ENCODE measurements at regions of chr1 and their contacts with region 1.

Region 1: GRCh38 chr1:41241782-41242341 is at the start of gene SCMH1:
- DNase-seq: peak; percentile 72
- H3K4me3 ChIP-seq: peak within 1 kb of the TSS; percentile 53 to 77 (median 69)
- H3K27ac ChIP-seq: peak within 1 kb of the TSS; percentile 97 to 99 (median 98)
- H3K4me1 ChIP-seq: peaks cover 0 to 81% (median 67%) of the 10 kb centered on the region in 4 donors
- H3K27me3 ChIP-seq: no peaks in the 10 kb centered on the region
- CTCF ChIP-seq: no peak
- EP300 ChIP-seq: no peak
- POLR2A ChIP-seq: no peak
- total RNA-seq, gene SCMH1: 52.4 to 95.8 (median 70.4) TPM

Region 2: GRCh38 chr1:40862008-40862863 is 379.6 kb before region 1 on chr1 and contains the start of gene CITED4:
- intact Hi-C with region 1: loop called (anchors 10 kb)
- DNase-seq: peak; percentile 98
- H3K4me3 ChIP-seq: peak within 1 kb of the TSS; percentile 48 to 90 (median 82)
- H3K27ac ChIP-seq: peak within 1 kb of the TSS; percentile 85 to 98 (median 90)
- H3K4me1 ChIP-seq: peaks cover 0 to 56% (median 48%) of the 10 kb centered on the region in 4 donors
- H3K27me3 ChIP-seq: no peaks in the 10 kb centered on the region
- CTCF ChIP-seq: peak in 1 of 4 experiments; percentile 15
- EP300 ChIP-seq: no peak
- POLR2A ChIP-seq: peak; percentile 90 to 95
- total RNA-seq, gene CITED4: 22.7 to 59.8 (median 36.9) TPM

Region 3: GRCh38 chr1:41023279-41023990 is 218.4 kb before region 1 on chr1:
- intact Hi-C with region 1: loop called (anchors 10 kb)
- DNase-seq: no peak
- H3K4me3 ChIP-seq: no peak overlapping the region
- H3K27ac ChIP-seq: no peak overlapping the region
- H3K4me1 ChIP-seq: peaks cover 0 to 11% (median 7%) of the 10 kb centered on the region in 4 donors
- H3K27me3 ChIP-seq: no peaks in the 10 kb centered on the region
- CTCF ChIP-seq: peak in 1 of 4 experiments; percentile 36
- EP300 ChIP-seq: no peak
- POLR2A ChIP-seq: no peak

Region 4: DNA sequence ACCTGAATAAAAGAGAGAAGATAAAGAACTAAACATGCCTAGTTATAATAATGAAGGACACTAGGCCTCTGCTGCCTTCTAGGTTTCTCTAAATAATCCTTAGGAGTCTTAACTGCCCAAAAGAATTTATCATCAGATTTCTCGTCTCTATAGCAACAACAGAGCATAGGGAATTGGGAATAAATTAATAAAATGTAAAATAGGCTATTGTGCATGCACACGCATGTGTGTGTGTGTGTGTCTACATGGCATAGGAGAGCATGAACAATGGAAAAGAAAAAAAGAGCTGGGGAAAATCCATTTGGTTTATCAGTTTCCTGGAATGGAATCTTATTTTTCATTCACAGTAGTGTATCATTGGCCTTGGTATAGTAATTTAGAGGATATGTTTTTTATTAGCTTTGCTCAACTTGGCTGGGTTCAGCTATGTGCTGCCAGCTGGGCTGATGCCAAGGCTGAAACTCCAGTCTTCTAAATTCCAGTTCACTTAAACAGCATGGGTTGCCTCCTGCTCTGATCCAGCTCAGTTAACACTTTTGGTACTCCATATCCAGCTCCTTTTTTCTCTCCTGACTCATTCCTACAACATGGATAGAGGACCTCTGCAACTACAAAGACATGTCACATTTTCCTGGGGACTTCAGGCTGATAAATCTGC is 139.8 kb before region 1 on chr1:
- intact Hi-C with region 1: loop called (anchors 1 kb)
- DNase-seq: peak; percentile 97
- H3K4me3 ChIP-seq: no peak overlapping the region
- H3K27ac ChIP-seq: peak overlapping the region; percentile 68 to 81 (median 74)
- H3K4me1 ChIP-seq: peaks cover 0 to 44% (median 35%) of the 10 kb centered on the region in 4 donors
- H3K27me3 ChIP-seq: no peaks in the 10 kb centered on the region
- CTCF ChIP-seq: no peak
- EP300 ChIP-seq: no peak
- POLR2A ChIP-seq: no peak

Region 5: GRCh38 chr1:41152622-41153044 is 89.2 kb before region 1 on chr1:
- intact Hi-C with region 1: loop called (anchors 5 kb)
- DNase-seq: peak; percentile 65
- H3K4me3 ChIP-seq: no peak overlapping the region
- H3K27ac ChIP-seq: peak overlapping the region; percentile 71 to 86 (median 74)
- H3K4me1 ChIP-seq: peaks cover 0 to 46% (median 38%) of the 10 kb centered on the region in 4 donors
- H3K27me3 ChIP-seq: no peaks in the 10 kb centered on the region
- CTCF ChIP-seq: no peak
- EP300 ChIP-seq: peak in 3 of 4 donors; percentile 11 to 66 (median 28)
- POLR2A ChIP-seq: no peak

Region 6: DNA sequence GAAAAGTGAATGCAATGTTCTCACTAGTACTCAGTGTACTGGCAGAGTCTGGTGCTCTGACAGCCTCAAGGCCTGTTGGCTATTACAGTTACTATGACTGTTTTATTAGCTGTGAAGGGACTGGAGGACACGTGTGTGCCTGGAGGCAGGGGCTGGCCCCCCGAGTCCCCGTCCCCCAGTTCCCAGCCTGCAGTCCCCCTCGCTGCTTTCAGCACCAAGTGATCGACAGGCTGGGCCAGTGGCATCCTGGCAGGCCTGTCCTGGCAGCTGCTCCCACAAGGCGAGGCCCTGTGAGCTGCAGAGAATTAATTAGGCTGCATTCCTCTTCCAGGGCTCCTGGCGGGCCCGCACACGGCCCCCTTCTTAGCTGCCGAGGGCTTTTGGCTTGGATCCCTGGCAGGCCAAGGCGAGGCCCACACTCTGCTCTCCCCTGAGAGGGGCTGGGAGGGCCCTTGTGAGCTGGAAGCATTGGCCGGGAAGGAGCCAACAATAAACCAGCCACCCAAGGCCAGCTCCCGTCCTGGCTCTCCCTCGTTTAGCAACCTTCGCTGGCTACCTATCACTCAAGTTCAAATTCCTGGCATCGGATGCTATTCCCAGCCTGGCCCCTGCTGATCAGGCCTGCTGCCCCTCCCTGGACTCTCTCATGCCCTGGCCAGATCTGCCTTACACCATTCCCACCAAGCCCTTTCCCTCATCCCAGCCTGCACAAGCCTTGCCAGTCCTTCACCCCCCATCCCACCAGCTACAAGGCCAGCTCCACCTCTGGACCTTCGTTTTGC is 232.8 kb after region 1 on chr1:
- intact Hi-C with region 1: no loop called
- DNase-seq: peak; percentile 89
- H3K4me3 ChIP-seq: no peak overlapping the region
- H3K27ac ChIP-seq: peak overlapping the region; percentile 82 to 93 (median 86)
- H3K4me1 ChIP-seq: peaks cover 0 to 47% (median 44%) of the 10 kb centered on the region in 4 donors
- H3K27me3 ChIP-seq: no peaks in the 10 kb centered on the region
- CTCF ChIP-seq: no peak
- EP300 ChIP-seq: peak; percentile 69 to 97 (median 92)
- POLR2A ChIP-seq: no peak

Measured in sigmoid colon (tissue), 7 donors.